ENCODE measurements at regions of chr2 and their contacts with region 1.

Region 1: GRCh38 chr2:479490-480176 is 191.7 kb upstream of the ALKAL2 start:
- DNase-seq: no peak
- H3K4me3 ChIP-seq: no peak overlapping the region
- H3K27ac ChIP-seq: no peak overlapping the region
- H3K4me1 ChIP-seq: no peaks in the 10 kb centered on the region
- H3K27me3 ChIP-seq: no peaks in the 10 kb centered on the region
- CTCF ChIP-seq: no peak
- POLR2A ChIP-seq: no peak

Region 2: DNA sequence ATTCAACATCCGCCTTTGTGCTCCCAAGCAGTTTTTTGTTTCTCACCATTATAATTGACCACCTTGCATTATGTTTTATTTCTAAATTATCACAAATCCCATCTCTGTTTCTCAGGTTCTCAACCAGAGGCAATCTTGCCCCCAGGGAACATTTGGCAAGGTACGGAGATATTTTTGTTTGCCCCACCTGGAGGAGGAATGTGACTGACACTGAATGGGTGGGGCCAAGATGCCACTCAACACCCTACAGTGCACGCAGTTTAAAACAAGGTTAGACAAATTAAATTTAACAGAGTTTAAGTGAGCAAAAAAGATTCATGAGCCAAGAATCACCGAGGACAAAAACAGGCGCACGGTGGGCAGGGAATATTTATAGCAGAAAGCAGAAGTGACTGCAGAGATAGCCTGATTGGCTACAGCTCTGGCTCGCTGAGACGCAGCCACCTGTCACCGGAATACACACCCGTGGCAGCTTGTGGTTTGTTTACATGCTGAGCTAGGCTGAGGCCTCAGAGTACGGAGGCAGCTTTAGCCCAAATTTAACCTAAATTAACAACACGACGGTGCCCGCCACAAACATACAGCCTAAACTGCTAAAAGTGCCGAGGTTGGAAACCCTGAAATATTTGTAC is 41.8 kb before region 1 on chr2:
- intact Hi-C with region 1: no loop called
- DNase-seq: peak in 1 of 2 donors; percentile 46
- H3K4me3 ChIP-seq: peak overlapping the region in 1 of 3 donors; percentile 26
- H3K27ac ChIP-seq: peak overlapping the region in 1 of 2 donors; percentile 3
- H3K4me1 ChIP-seq: no peaks in the 10 kb centered on the region
- H3K27me3 ChIP-seq: no peaks in the 10 kb centered on the region
- CTCF ChIP-seq: no peak
- POLR2A ChIP-seq: no peak

Region 3: GRCh38 chr2:460861-461260 is 18.8 kb before region 1 on chr2:
- intact Hi-C with region 1: no loop called
- DNase-seq: peak in 1 of 2 donors; percentile 50
- H3K4me3 ChIP-seq: no peak overlapping the region
- H3K27ac ChIP-seq: no peak overlapping the region
- H3K4me1 ChIP-seq: no peaks in the 10 kb centered on the region
- H3K27me3 ChIP-seq: peaks cover 0 to 3% of the 10 kb centered on the region in 2 donors
- CTCF ChIP-seq: no peak
- POLR2A ChIP-seq: no peak

Region 4: GRCh38 chr2:509888-510287 is 30.3 kb after region 1 on chr2:
- intact Hi-C with region 1: loop called (anchors 2 kb)
- DNase-seq: no peak
- H3K4me3 ChIP-seq: no peak overlapping the region
- H3K27ac ChIP-seq: no peak overlapping the region
- H3K4me1 ChIP-seq: no peaks in the 10 kb centered on the region
- H3K27me3 ChIP-seq: no peaks in the 10 kb centered on the region
- CTCF ChIP-seq: no peak
- POLR2A ChIP-seq: no peak

Region 5: GRCh38 chr2:1324884-1325283 is 845.3 kb after region 1 on chr2:
- intact Hi-C with region 1: no loop called
- DNase-seq: no peak
- H3K4me3 ChIP-seq: no peak overlapping the region
- H3K27ac ChIP-seq: no peak overlapping the region
- H3K4me1 ChIP-seq: no peaks in the 10 kb centered on the region
- H3K27me3 ChIP-seq: no peaks in the 10 kb centered on the region
- CTCF ChIP-seq: no peak
- POLR2A ChIP-seq: no peak